Activated CD4-positive, alpha-beta memory T cell treated with anti-CD3 and anti-CD28 coated beads for 36 hours (primary cell): ENCODE measurements at regions of chr1 and their contacts with region 1.

Region 1: GRCh38 chr1:16366722-16367257 is at the start of gene SZRD1:
- DNase-seq: peak; percentile 98
- H3K4me3 Mint-ChIP-seq: peak within 1 kb of the TSS; percentile 97
- H3K27ac Mint-ChIP-seq: peak within 1 kb of the TSS; percentile 100
- H3K4me1 Mint-ChIP-seq: peaks cover 27% of the 10 kb centered on the region
- H3K27me3 Mint-ChIP-seq: no peaks in the 10 kb centered on the region
- total RNA-seq, gene SZRD1: 185 to 191 TPM

Region 2: GRCh38 chr1:15741183-15741850 is 625.5 kb before region 1 on chr1:
- CTCF ChIA-PET with region 1: no interaction called
- POLR2A ChIA-PET with region 1: no interaction called
- intact Hi-C with region 1: no loop called
- DNase-seq: peak; percentile 85
- H3K4me3 Mint-ChIP-seq: no peak overlapping the region
- H3K27ac Mint-ChIP-seq: no peak overlapping the region
- H3K4me1 Mint-ChIP-seq: peaks cover 5% of the 10 kb centered on the region
- H3K27me3 Mint-ChIP-seq: no peaks in the 10 kb centered on the region

Region 3: DNA sequence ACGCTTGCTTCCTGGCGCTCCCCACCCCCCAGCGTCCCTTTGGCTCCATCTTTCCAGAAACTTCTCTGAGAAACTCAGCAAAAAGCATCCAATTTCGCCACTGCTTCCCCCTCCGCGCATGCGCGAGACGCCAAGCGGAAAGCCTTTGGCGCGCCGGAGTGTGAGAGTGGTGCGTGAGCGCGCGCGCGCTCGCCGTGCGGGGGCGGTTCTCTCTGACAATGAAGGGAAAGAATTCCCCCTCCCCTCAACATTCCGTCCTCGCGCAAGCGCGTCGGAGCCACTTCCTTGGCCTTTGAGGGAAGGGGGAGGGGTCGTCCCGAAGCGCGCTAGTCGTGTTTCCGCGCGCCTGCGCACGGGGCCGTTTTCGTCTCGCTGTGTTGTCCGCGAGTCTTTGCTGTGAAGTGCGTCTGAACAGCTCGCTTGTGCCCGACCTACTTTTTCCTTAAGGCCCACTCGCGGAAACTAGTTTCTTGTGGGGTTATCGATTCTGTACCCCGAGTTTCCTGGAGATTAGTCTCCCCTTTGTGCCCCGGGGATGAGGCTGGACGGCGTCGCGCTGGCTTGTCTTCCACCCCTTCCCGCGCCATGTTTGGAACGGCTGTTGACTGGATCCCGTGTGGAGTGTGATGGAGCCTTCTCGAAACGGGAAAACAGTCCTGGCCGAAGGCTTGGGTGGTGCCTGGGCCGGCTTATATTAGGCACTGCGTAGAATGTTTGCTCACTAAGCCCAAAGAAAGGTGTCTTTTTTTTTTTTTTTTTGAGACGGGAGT is 530.9 kb before region 1 on chr1:
- CTCF ChIA-PET with region 1: no interaction called
- POLR2A ChIA-PET with region 1: no interaction called
- intact Hi-C with region 1: loop called (anchors 1 kb)
- DNase-seq: peak; percentile 100
- H3K4me3 Mint-ChIP-seq: peak overlapping the region; percentile 81
- H3K27ac Mint-ChIP-seq: peak overlapping the region; percentile 96
- H3K4me1 Mint-ChIP-seq: peaks cover 18% of the 10 kb centered on the region
- H3K27me3 Mint-ChIP-seq: no peaks in the 10 kb centered on the region

Region 4: DNA sequence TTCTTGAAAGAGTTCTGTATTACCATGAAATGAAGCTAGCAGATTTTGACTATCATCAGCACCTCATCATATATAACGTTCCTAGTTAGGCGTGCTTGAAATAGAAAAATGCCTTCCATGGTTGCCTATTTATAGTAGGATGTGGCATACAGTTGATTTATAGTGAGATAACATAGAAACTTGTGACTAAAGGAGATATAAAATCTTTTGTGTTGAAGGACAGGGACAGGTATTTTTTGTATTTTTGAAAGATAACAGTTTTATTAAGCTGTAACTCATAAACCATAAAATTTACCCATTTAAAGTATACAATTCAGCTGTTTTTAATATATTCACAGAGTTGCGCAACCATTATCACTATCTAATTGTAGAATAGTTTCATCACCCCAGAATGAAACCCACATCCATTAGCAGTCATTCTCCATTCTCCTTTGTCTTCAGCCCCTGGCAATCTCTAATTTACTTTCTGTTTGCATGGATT is 500.0 kb before region 1 on chr1:
- CTCF ChIA-PET with region 1: no interaction called
- POLR2A ChIA-PET with region 1: no interaction called
- intact Hi-C with region 1: no loop called
- DNase-seq: no peak
- H3K4me3 Mint-ChIP-seq: no peak overlapping the region
- H3K27ac Mint-ChIP-seq: no peak overlapping the region
- H3K4me1 Mint-ChIP-seq: peaks cover 49% of the 10 kb centered on the region
- H3K27me3 Mint-ChIP-seq: no peaks in the 10 kb centered on the region

Region 5: DNA sequence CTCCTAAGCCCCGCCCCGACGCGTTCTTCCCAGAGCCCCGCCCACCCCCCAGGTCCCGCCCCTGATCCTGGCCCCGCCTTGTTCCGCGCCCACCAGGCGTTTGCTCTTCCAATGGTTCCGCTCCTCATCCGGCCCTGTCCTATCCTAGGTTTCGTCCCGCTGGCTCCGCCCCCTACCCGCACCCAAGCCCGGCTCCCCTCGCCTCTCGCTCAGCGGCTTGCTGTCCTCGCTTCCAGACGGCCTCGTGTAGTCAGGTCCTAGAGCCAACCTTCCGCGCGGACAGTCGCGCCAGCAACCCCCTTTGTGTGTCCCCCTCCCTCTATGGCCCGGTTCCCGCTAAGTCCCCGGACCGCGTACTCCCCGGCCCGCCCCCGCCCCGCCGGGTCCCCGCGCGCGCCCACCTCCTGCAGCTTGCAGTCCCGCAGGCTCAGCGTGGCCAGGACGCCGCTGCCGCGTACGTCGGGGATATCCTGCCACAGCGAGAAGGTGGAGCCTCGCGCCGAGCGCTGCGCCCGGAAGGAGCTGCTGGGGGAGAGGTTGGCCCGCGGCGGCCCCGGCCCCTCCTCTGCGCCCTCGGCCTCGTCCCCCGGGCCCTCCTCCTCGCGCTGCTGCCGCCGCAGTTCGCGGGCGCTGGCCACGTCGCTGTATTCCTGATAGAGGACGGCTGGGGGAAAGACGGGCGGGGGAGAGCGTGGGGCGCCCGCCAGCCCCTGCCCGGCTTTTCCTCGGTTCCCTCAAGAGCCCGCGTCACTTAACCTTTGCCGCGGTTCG is 160.1 kb before region 1 on chr1:
- CTCF ChIA-PET with region 1: interaction called, 5 read pairs
- POLR2A ChIA-PET with region 1: no interaction called
- intact Hi-C with region 1: loop called (anchors 1 kb)
- DNase-seq: peak; percentile 96
- H3K4me3 Mint-ChIP-seq: peak overlapping the region; percentile 80
- H3K27ac Mint-ChIP-seq: peak overlapping the region; percentile 91
- H3K4me1 Mint-ChIP-seq: peaks cover 12% of the 10 kb centered on the region
- H3K27me3 Mint-ChIP-seq: no peaks in the 10 kb centered on the region

Region 6: DNA sequence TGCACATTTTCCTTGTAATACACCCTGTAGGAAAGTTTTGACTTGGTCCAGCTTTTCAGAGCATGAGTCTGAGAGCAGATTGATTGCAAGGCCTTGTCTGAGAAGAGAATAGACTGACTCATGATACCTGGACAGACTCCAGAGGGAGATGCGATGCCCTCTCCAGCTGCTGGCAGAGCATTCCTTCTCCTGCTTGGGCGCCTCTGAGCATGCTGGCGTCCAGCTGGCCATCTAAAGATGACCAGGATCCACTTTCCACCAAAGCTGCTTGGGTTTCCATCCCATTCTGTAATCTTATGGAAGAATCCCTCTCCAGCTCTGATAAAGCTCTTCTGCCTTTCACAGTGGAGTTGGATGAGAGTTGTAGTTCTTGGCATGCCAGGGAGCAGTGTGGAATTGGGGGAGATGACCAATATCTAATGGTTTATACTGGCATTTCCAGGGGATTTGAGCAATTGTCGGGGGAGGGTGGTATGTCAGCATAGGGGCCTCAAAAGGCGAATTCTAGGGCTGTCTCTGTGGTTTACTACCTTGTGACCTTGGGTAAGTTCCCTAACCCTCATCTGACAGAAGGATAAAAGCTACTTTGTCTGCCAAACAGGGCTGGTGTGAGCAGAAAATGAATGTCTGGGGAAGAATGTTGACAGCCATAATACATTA is 19.8 kb after region 1 on chr1:
- CTCF ChIA-PET with region 1: interaction called, 5 read pairs
- POLR2A ChIA-PET with region 1: interaction called, 4 read pairs
- intact Hi-C with region 1: loop called (anchors 1 kb)
- DNase-seq: no peak
- H3K4me3 Mint-ChIP-seq: peak overlapping the region; percentile 37
- H3K27ac Mint-ChIP-seq: peak overlapping the region; percentile 5
- H3K4me1 Mint-ChIP-seq: peaks cover 69% of the 10 kb centered on the region
- H3K27me3 Mint-ChIP-seq: no peaks in the 10 kb centered on the region

Region 7: DNA sequence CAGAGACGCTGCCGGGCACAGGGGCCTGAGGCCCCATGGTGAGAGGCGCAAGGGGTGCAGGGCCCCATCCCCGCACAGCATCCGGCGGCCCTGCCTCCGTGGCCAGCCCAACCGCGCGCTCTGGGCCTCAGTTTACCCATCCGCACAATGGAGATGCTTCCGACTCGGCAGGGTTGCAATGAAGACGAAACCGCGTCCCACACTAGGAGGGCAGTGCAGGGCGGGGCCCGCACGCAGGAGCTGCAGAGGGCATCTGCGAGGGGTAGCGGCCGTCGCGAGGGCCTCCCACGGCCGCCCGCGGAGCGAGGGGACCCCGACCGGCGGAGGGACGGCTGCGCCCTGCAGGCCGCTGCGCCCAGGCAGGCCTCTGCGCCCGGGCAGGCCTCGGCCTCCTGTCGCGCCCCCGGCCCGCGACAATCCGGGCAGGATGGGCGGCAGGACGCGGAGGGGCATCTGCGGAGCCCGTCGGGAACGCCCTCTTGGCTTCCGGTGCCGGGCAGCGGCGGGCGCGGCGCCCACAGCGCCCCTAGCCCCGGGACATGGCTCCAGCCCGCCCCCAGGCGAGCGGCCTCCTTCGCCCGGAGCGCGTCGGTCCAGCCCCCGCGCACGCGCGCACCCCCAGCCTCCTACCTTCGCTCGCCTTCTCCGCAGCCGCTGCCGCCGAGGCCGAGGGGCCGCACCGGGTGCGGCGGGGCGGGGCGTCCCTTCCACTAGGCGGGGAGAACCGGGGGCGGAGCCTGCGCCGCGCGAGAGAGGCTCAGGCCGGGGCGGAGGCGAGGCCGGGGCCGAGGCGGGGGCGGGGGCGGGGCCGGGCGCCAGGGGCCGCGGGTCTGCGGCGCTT is 132.0 kb after region 1 on chr1:
- CTCF ChIA-PET with region 1: no interaction called
- POLR2A ChIA-PET with region 1: no interaction called
- intact Hi-C with region 1: loop called (anchors 10 kb)
- DNase-seq: peak; percentile 89
- H3K4me3 Mint-ChIP-seq: peak overlapping the region; percentile 78
- H3K27ac Mint-ChIP-seq: no peak overlapping the region
- H3K4me1 Mint-ChIP-seq: peaks cover 19% of the 10 kb centered on the region
- H3K27me3 Mint-ChIP-seq: no peaks in the 10 kb centered on the region

Region 8: DNA sequence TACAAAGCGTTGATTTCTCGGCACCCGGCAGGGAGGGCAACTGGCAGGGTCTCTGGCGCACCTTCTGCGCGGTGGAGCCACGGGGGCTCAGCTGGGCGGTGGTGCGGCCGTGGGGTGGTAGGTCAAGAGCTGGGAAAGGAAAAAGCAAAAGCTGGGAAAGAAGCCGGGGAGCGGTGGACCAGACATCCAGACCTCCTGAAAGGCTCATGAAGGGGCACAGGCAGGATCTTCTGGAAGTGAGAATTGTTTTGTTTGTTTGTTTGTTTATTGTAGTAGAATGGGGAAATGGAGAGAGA is 154.4 kb after region 1 on chr1:
- CTCF ChIA-PET with region 1: no interaction called
- POLR2A ChIA-PET with region 1: no interaction called
- intact Hi-C with region 1: no loop called
- DNase-seq: no peak
- H3K4me3 Mint-ChIP-seq: no peak overlapping the region
- H3K27ac Mint-ChIP-seq: no peak overlapping the region
- H3K4me1 Mint-ChIP-seq: no peaks in the 10 kb centered on the region
- H3K27me3 Mint-ChIP-seq: peaks cover 32% of the 10 kb centered on the region